ENCODE measurements at regions of chr2 and their contacts with region 1.

Region 1: GRCh38 chr2:55050133-55050994 is at the start of gene RTN4:
- DNase-seq: peak; percentile 99
- H3K4me3 Mint-ChIP-seq: peak within 1 kb of the TSS; percentile 97
- H3K27ac Mint-ChIP-seq: peak within 1 kb of the TSS; percentile 97
- H3K4me1 Mint-ChIP-seq: peaks cover 58% of the 10 kb centered on the region
- H3K27me3 Mint-ChIP-seq: no peaks in the 10 kb centered on the region
- total RNA-seq, gene RTN4: 76.4 to 76.7 TPM

Region 2: DNA sequence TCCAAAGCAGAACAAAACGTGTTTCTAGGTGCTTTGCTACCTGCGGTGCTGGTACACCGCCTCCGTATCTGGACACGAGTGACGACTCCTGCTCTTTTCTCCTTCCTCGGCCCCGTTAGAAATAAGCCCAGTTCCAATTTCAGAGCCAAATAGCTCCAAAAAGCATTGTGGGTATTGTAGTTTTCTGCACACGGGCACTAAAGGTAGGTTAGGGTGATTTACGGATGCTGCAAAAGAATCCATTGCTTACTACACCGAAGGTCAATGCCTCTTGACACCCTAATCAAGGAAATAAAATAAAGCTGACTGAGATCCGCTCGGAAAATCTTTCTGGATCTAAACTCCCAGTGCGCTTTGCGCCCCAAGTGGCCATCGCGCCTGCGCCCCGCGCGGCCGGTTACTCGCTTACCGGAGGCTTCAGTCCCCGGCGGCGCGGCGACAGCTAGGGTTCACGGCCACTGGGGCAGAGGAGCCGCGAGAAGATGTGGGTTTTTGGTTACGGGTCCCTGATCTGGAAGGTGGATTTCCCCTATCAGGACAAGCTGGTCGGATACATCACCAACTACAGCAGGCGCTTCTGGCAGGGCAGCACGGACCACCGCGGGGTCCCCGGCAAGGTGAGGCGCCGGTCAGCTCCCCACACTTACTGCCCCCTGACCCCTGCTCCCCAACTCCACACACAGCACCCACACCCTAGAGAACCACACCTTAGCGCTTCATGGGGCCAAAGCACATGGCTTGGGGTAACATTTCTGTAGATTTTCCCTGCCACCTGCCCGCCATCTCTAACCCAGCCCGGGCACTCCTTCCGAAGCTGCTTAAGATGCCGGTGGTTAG is 1282.7 kb before region 1 on chr2 and contains the start of gene CHAC2:
- CTCF ChIA-PET with region 1: no interaction called
- intact Hi-C with region 1: loop called (anchors 2 kb)
- DNase-seq: peak; percentile 91
- H3K4me3 Mint-ChIP-seq: peak within 1 kb of the TSS; percentile 94
- H3K27ac Mint-ChIP-seq: peak within 1 kb of the TSS; percentile 93
- H3K4me1 Mint-ChIP-seq: peaks cover 26% of the 10 kb centered on the region
- H3K27me3 Mint-ChIP-seq: no peaks in the 10 kb centered on the region
- total RNA-seq, gene CHAC2: 11.5 to 12.4 TPM

Region 3: GRCh38 chr2:54522624-54523281 is 527.6 kb before region 1 on chr2:
- CTCF ChIA-PET with region 1: no interaction called
- intact Hi-C with region 1: loop called (anchors 5 kb)
- DNase-seq: peak; percentile 73
- H3K4me3 Mint-ChIP-seq: no peak overlapping the region
- H3K27ac Mint-ChIP-seq: no peak overlapping the region
- H3K4me1 Mint-ChIP-seq: peaks cover 15% of the 10 kb centered on the region
- H3K27me3 Mint-ChIP-seq: no peaks in the 10 kb centered on the region

Region 4: GRCh38 chr2:54899576-54900200 is 150.7 kb before region 1 on chr2:
- CTCF ChIA-PET with region 1: interaction called, 4 read pairs
- intact Hi-C with region 1: loop called (anchors 1 kb)
- DNase-seq: no peak
- H3K4me3 Mint-ChIP-seq: no peak overlapping the region
- H3K27ac Mint-ChIP-seq: no peak overlapping the region
- H3K4me1 Mint-ChIP-seq: peaks cover 27% of the 10 kb centered on the region
- H3K27me3 Mint-ChIP-seq: no peaks in the 10 kb centered on the region

Region 5: DNA sequence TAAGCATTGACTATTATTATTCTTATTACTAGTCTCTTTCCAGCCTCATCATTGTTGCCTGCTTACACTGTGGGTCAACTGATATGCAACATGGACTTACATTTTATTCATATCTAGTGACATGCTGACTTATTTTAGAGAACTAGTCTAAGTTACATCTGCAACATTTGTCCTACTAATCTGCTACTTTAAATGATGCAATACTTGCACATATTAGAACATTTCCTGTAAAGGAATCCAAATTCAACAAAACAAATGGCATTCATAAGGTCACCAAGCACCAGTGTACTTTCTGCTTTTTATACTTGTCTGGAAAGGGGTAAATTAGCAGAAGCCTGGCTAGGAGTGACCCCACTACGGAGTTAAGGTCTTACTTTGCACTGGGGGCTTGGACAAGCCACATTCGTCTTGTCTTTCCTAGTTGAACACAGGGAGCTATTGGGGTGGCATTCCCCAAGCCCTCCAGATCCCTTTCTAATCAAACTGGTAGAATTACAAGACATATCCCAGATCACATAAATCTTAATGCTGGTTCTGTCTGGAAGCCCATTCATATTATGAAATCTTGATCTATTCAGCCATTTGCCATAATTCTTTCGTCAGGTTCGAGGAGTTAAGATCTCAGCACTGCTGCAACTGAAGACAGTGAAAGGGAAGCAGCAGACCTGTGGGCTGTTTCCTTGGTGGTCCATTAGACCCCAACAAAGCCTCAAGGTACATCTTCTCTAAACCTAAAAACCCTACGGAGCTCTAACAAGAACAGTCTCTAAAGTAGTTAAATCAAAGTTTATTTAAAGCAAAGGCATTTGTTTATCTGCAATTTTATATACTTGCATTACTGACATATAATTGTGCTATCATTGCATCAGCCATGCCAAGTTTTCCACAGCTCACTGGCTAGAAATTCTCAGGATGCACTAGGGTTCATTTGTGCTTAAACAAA is 49.8 kb after region 1 on chr2:
- CTCF ChIA-PET with region 1: no interaction called
- intact Hi-C with region 1: loop called (anchors 1 kb)
- DNase-seq: no peak
- H3K4me3 Mint-ChIP-seq: no peak overlapping the region
- H3K27ac Mint-ChIP-seq: peak overlapping the region; percentile 79
- H3K4me1 Mint-ChIP-seq: peaks cover 16% of the 10 kb centered on the region
- H3K27me3 Mint-ChIP-seq: no peaks in the 10 kb centered on the region

Region 6: DNA sequence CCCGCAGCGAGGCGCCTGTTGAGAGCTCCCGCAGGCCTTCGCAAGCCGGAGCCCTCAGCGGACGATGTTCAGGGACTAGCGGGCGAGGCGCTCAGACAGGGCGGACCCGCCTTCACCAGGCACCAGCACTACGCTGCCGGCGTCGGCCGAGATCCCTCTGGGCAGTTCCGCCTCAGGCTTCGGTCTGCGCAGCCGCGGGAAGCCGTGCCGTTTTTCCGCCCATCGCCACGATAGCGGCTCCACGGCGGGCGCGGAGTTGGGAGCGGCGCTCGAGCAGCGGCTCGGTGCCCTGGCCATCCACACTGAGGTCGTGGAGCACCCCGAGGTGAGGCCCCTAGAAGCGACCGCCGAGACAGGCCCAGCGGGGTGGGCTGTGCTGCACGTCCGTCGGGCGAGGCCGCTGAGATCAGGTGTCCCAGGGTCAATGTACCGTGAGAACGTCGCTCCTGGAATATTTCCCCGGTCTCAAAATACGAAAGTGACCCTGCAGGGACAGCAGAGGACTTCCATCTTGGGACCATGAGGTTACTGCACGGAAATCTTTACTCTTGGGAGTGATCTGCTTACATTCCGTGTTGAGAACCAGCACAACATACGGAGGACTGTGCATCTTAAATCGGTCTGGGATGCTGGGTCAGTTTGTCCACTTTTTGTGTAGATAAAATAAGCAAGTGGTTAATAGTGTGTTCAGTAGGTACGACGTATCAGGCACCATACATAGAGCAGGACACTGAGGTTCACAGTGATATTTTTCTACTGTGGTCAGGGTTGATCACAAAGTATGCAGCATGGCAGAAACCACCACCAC is 231.9 kb after region 1 on chr2:
- CTCF ChIA-PET with region 1: no interaction called
- intact Hi-C with region 1: loop called (anchors 5 kb)
- DNase-seq: peak; percentile 85
- H3K4me3 Mint-ChIP-seq: peak overlapping the region; percentile 84
- H3K27ac Mint-ChIP-seq: peak overlapping the region; percentile 85
- H3K4me1 Mint-ChIP-seq: peaks cover 22% of the 10 kb centered on the region
- H3K27me3 Mint-ChIP-seq: no peaks in the 10 kb centered on the region

Region 7: GRCh38 chr2:55693181-55694134 is 643.1 kb after region 1 on chr2 and contains the start of gene PNPT1:
- CTCF ChIA-PET with region 1: no interaction called
- intact Hi-C with region 1: loop called (anchors 5 kb)
- DNase-seq: peak; percentile 96
- H3K4me3 Mint-ChIP-seq: peak within 1 kb of the TSS; percentile 92
- H3K27ac Mint-ChIP-seq: peak within 1 kb of the TSS; percentile 86
- H3K4me1 Mint-ChIP-seq: peaks cover 34% of the 10 kb centered on the region
- H3K27me3 Mint-ChIP-seq: no peaks in the 10 kb centered on the region
- total RNA-seq, gene PNPT1: 54.1 to 60.7 TPM

Measured in activated naive CD4-positive, alpha-beta T cell treated with anti-CD3 and anti-CD28 coated beads for 36 hours (primary cell).